Mammary epithelial cell (primary cell): ENCODE measurements at regions of chr3 and their contacts with region 1.

Region 1: GRCh38 chr3:30628901-30629590 is 22.6 kb downstream of the TGFBR2 start:
- DNase-seq: no peak
- H3K4me3 ChIP-seq: no peak overlapping the region
- H3K27ac ChIP-seq: peak overlapping the region; percentile 30
- H3K4me1 ChIP-seq: peaks cover 83% of the 10 kb centered on the region
- H3K27me3 ChIP-seq: no peaks in the 10 kb centered on the region
- CTCF ChIP-seq: peak; percentile 11 to 53

Region 2: DNA sequence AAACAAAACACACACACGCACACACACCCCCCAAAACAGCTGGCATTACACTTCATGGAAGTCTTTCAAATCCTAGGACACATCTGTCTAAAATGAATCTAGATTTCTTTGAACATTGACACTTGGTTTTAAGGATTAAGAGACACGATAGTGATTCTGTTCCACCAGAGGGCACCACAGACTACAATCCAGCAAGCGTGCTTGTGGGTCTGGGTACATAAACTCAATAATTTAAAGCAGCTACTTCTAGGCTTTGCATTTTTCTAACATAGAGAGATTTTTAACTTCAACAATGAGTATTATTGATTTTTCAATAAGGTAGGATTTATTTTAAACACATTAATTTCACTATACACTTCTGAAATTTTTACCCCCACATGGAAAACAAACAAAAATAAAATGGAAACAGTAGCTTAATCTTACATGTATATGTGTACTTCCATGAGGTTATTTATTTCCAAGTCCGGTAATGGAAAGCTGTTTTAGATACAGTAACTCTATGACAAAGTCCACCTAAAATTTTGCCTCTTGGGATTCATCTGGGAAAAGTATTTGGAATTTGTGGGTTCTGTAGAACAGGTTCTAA is 586.7 kb before region 1 on chr3:
- CTCF ChIA-PET with region 1: no interaction called
- dilution Hi-C with region 1: no loop called
- in situ Hi-C with region 1: no loop called
- intact Hi-C with region 1: loop called (anchors 10 kb)
- DNase-seq: peak; percentile 39
- H3K4me3 ChIP-seq: no peak overlapping the region
- H3K27ac ChIP-seq: no peak overlapping the region
- H3K4me1 ChIP-seq: no peaks in the 10 kb centered on the region
- H3K27me3 ChIP-seq: no peaks in the 10 kb centered on the region
- CTCF ChIP-seq: peak; percentile 72 to 75

Region 3: DNA sequence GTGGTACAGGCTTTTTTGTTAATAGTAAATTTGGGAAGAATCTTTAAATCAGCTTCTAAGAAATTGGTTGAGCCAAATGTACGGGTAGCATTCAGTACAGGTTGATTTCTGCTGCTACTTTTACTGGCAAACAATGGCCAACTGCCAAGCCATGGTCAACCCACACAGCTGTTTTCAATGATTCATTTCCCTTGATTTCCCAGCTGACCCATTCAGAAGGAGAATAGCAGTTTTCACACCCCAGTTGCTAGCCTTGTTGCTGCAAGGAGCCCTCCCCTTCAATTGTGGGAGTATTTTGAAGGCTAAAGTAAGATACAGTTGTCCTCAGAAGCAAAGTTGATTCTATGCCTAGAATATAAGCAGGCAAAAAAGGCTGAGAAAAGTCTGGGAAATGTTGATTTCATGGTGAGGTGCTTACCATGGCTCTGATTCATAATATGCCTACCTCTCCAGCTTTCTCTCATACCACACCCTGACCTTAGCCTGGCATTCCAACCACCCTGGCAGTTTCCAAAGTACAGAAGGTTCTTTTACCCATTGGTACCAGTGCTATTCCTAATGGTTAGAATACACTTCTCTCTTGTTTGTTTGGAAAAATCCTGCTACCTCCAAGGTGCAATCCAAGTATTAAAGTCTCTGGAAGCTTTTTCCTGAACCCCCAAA is 342.9 kb before region 1 on chr3:
- CTCF ChIA-PET with region 1: no interaction called
- dilution Hi-C with region 1: no loop called
- in situ Hi-C with region 1: no loop called
- intact Hi-C with region 1: loop called (anchors 5 kb)
- DNase-seq: peak; percentile 93
- H3K4me3 ChIP-seq: no peak overlapping the region
- H3K27ac ChIP-seq: peak overlapping the region; percentile 87
- H3K4me1 ChIP-seq: peaks cover 60% of the 10 kb centered on the region
- H3K27me3 ChIP-seq: no peaks in the 10 kb centered on the region
- CTCF ChIP-seq: no peak

Region 4: DNA sequence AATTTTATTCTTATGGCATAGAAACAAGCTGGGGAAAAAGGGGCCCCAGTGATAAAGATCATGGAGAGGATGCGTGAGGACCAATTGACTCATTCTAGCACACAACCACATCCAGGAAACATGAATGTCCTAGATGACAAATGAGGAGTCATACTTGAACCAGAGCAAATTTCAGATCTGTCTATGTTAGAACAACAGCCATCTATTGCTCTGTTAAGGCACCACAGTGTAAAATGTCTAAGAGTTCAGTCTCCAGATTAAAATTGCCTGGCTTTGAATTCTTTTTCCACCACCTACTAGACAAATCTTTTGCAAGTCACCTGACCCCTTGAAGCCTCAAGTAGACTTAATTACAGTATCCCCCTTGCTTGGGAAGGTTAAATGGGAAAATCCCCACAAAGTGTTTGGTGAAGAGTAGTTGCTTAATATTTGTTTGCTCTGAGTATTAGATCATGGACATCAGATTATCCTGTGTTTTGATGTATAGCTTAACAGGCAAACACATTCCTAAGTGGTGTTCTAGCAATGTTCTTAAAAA is 281.3 kb before region 1 on chr3:
- CTCF ChIA-PET with region 1: no interaction called
- dilution Hi-C with region 1: no loop called
- in situ Hi-C with region 1: loop called in 1 of 2 experiments (anchors 25 kb)
- intact Hi-C with region 1: loop called (anchors 5 kb)
- DNase-seq: peak; percentile 93
- H3K4me3 ChIP-seq: no peak overlapping the region
- H3K27ac ChIP-seq: peak overlapping the region; percentile 92
- H3K4me1 ChIP-seq: peaks cover 78% of the 10 kb centered on the region
- H3K27me3 ChIP-seq: no peaks in the 10 kb centered on the region
- CTCF ChIP-seq: no peak

Region 5: GRCh38 chr3:30401971-30402370 is 227.1 kb before region 1 on chr3:
- CTCF ChIA-PET with region 1: no interaction called
- dilution Hi-C with region 1: no loop called
- in situ Hi-C with region 1: no loop called
- intact Hi-C with region 1: loop called (anchors 10 kb)
- DNase-seq: peak; percentile 67
- H3K4me3 ChIP-seq: no peak overlapping the region
- H3K27ac ChIP-seq: no peak overlapping the region
- H3K4me1 ChIP-seq: peaks cover 7% of the 10 kb centered on the region
- H3K27me3 ChIP-seq: no peaks in the 10 kb centered on the region
- CTCF ChIP-seq: no peak

Region 6: DNA sequence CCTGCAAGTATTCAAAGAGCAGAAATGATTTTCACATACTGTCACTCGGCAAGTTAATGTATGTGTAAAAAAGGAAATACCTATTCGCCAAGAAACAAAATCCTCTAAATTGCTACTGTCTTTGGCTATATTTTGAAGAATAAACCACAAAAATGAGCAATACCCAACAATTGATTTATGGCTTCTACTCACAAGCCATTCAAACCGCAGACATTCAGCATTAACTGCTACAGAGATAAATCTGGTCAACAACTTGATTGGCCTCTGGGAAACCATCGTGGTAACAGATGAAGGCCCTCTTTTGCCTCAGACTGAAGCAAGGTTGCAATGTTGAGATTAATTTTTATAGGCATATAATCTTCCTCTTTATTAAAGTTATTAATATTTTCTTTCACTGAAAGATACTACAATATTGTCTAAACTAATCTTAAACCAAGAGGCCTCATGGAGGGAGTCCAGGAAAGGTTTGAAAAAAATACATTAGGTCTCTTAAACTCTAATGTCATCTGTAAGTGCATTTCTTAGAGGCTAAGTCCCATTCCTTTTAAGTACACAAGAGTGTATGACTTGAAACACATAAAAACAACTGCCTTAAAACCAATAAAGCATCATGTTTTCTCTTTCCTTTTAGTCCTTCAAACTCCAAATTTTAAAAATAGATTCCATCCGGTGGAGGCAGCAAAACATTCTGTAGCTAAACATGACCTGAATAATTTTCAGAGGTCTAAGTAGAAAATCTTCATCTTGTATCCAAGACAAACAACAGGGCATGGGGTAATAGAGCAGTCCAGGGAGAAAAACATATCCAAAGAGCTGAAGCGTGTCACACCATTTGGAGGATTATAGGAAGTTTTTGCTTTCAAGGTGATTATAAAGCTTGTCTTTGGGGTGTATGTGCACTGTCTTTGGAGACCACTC is 185.0 kb before region 1 on chr3:
- CTCF ChIA-PET with region 1: no interaction called
- dilution Hi-C with region 1: no loop called
- in situ Hi-C with region 1: no loop called
- intact Hi-C with region 1: no loop called
- DNase-seq: no peak
- H3K4me3 ChIP-seq: no peak overlapping the region
- H3K27ac ChIP-seq: no peak overlapping the region
- H3K4me1 ChIP-seq: peaks cover 14% of the 10 kb centered on the region
- H3K27me3 ChIP-seq: no peaks in the 10 kb centered on the region
- CTCF ChIP-seq: no peak

Region 7: GRCh38 chr3:30511524-30512278 is 117.3 kb before region 1 on chr3:
- CTCF ChIA-PET with region 1: no interaction called
- dilution Hi-C with region 1: no loop called
- in situ Hi-C with region 1: no loop called
- intact Hi-C with region 1: loop called (anchors 5 kb)
- DNase-seq: peak; percentile 97
- H3K4me3 ChIP-seq: peak overlapping the region in 1 of 3 experiments; percentile 6
- H3K27ac ChIP-seq: peak overlapping the region; percentile 93
- H3K4me1 ChIP-seq: peaks cover 34% of the 10 kb centered on the region
- H3K27me3 ChIP-seq: no peaks in the 10 kb centered on the region
- CTCF ChIP-seq: no peak

Region 8: GRCh38 chr3:30644593-30645012 is 15.6 kb after region 1 on chr3:
- CTCF ChIA-PET with region 1: no interaction called
- dilution Hi-C with region 1: no loop called
- in situ Hi-C with region 1: no loop called
- intact Hi-C with region 1: loop called (anchors 1 kb)
- DNase-seq: no peak
- H3K4me3 ChIP-seq: no peak overlapping the region
- H3K27ac ChIP-seq: no peak overlapping the region
- H3K4me1 ChIP-seq: peaks cover 9% of the 10 kb centered on the region
- H3K27me3 ChIP-seq: no peaks in the 10 kb centered on the region
- CTCF ChIP-seq: no peak

Region 9: DNA sequence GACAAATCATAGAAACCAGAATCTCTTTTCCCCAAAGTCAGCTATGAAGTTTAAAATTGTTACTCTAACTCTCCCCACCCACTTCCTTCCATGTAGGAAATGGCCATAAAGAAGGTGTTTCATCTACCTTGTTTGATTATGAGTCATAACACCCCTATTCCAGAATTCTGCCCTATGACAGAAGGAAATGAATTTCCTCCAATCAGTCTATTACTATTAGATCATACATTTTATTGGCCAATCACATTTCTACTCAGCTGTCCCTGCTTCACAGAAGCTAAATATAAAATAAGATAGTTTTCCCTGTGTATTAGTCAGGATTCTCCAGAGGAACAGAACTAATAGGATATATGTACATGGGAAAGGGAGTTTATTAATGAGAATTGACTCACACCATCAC is 79.4 kb after region 1 on chr3:
- CTCF ChIA-PET with region 1: no interaction called
- dilution Hi-C with region 1: no loop called
- in situ Hi-C with region 1: no loop called
- intact Hi-C with region 1: no loop called
- DNase-seq: peak; percentile 66
- H3K4me3 ChIP-seq: no peak overlapping the region
- H3K27ac ChIP-seq: no peak overlapping the region
- H3K4me1 ChIP-seq: peaks cover 25% of the 10 kb centered on the region
- H3K27me3 ChIP-seq: no peaks in the 10 kb centered on the region
- CTCF ChIP-seq: no peak